ENCODE measurements at regions of chr16 and their contacts with region 1.

Region 1: GRCh38 chr16:11407047-11407982 is 62.1 kb downstream of the RMI2 start:
- DNase-seq: peak; percentile 64 to 75
- H3K4me3 ChIP-seq: no peak overlapping the region
- H3K27ac ChIP-seq: no peak overlapping the region
- H3K4me1 ChIP-seq: peaks cover 0 to 5% of the 10 kb centered on the region in 2 donors
- H3K27me3 ChIP-seq: no peaks in the 10 kb centered on the region
- CTCF ChIP-seq: peak; percentile 37 to 86 (median 68)
- POLR2A ChIP-seq: no peak

Region 2: GRCh38 chr16:11506741-11507305 is 99.5 kb after region 1 on chr16:
- intact Hi-C with region 1: no loop called
- DNase-seq: no peak
- H3K4me3 ChIP-seq: no peak overlapping the region
- H3K27ac ChIP-seq: peak overlapping the region in 1 of 3 donors; percentile 61
- H3K4me1 ChIP-seq: peaks cover 6 to 28% of the 10 kb centered on the region in 2 donors
- H3K27me3 ChIP-seq: no peaks in the 10 kb centered on the region
- CTCF ChIP-seq: no peak
- POLR2A ChIP-seq: no peak

Region 3: DNA sequence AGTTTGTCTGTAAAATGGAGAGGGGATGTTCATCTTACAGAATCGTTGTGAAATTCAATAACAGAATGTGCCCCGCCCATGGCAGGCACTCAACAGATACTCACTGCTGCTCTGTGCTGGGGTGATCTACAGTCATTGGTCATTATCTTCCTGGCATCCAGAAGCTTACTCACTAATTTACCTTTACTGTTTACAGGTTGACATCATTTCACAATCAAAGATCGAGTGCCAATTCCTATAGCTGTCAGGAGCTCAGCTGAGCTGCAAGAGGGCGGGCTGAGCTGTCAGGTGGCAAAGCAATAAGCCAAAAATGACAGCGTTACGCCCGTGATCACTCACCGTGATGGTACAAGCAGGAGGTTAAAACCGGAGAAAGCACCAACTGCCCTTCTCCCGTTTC is 128.2 kb after region 1 on chr16:
- intact Hi-C with region 1: loop called (anchors 10 kb)
- DNase-seq: no peak
- H3K4me3 ChIP-seq: no peak overlapping the region
- H3K27ac ChIP-seq: no peak overlapping the region
- H3K4me1 ChIP-seq: peaks cover 0 to 5% of the 10 kb centered on the region in 2 donors
- H3K27me3 ChIP-seq: no peaks in the 10 kb centered on the region
- CTCF ChIP-seq: no peak
- POLR2A ChIP-seq: no peak

Region 4: GRCh38 chr16:11639925-11640899 is 232.9 kb after region 1 on chr16:
- intact Hi-C with region 1: loop called (anchors 5 kb)
- DNase-seq: peak; percentile 88 to 90
- H3K4me3 ChIP-seq: no peak overlapping the region
- H3K27ac ChIP-seq: peak overlapping the region; percentile 88 to 97 (median 92)
- H3K4me1 ChIP-seq: peaks cover 15 to 21% of the 10 kb centered on the region in 2 donors
- H3K27me3 ChIP-seq: no peaks in the 10 kb centered on the region
- CTCF ChIP-seq: no peak
- POLR2A ChIP-seq: peak in 1 of 2 donors; percentile 76